H1 (cell line): ENCODE measurements at regions of chr9 and their contacts with region 1.

Region 1: GRCh38 chr9:124537926-124538325 is 30.7 kb upstream of the NR5A1 start:
- DNase-seq: no peak
- H3K4me3 ChIP-seq: no peak overlapping the region
- H3K27ac ChIP-seq: no peak overlapping the region
- H3K4me1 ChIP-seq: no peaks in the 10 kb centered on the region
- H3K27me3 ChIP-seq: no peaks in the 10 kb centered on the region
- CTCF ChIP-seq: no peak
- EP300 ChIP-seq: no peak
- POLR2A ChIP-seq: no peak
- RAD21 ChIP-seq: no peak

Region 2: DNA sequence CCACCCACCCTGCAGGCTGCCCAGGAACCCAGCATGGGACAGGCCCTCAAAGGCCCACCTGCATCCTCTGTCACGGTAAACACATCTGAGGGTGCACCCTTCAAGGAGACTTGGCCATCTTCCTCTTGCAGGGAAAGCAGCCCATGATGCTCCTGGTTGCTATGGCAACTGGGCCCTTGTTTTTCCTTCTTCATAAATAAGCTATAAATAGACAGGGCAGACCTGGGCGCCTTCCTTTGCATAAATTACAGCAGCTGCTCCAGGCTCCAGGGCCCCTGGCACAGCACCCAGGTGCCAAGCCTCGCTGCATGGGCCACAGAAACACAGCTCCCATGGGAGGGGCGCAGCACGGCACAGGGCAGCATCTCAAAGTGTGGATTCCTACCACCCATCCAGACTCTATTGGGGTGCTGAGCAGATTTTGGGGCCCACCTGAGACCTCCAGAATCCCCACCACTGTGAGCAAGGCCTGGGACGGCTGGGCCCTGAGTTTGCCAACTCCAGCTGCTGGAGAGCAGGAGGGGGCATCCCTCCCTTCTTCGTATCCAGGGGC is 116.9 kb before region 1 on chr9:
- CTCF ChIA-PET with region 1: interaction called, 19 read pairs
- POLR2A ChIA-PET with region 1: no interaction called
- DNase-seq: no peak
- H3K4me3 ChIP-seq: no peak overlapping the region
- H3K27ac ChIP-seq: no peak overlapping the region
- H3K4me1 ChIP-seq: peaks cover 0 to 2% (median 0%) of the 10 kb centered on the region in 4 experiments; a peak in 3 of 7 replicates
- H3K27me3 ChIP-seq: peaks cover 0 to 3% (median 0%) of the 10 kb centered on the region in 4 experiments; a peak in 2 of 7 replicates
- CTCF ChIP-seq: no peak
- EP300 ChIP-seq: no peak
- POLR2A ChIP-seq: no peak
- RAD21 ChIP-seq: no peak

Region 3: DNA sequence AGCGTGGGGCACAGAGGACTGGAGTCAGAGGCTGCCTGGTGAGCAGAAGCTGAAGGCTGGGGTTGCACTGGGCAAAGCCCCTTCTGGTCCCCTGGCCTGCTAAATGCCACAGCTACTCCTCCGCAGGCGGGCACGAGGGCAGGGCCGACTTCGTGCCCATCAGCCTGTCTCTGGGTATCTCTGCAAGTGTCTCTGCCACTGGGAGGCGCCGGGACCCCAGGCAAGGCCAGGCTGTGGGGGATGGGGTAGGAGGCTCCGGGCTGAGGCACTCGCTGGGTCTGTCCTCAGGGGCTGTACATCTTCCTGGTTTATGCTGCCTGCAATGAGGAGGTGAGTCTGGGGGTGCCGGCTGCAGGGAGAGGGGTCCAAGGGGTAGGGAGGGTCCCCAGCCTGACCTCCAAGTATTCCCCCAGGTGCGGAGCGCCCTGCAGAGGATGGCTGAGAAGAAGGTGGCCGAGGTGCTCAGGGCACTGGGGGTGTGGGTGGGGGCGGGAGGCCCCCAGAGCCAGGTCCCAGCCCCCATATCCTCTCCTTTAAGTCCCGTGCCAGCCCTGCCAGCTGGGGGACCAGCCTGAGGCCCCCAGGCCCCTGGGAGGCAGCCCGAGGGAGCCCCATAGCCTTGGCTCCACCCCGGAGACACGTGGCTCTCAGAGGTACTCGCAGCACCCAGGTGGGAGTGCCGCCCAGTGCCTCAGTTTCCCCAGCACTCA is 62.6 kb before region 1 on chr9:
- CTCF ChIA-PET with region 1: interaction called, 18 read pairs
- POLR2A ChIA-PET with region 1: no interaction called
- DNase-seq: no peak
- H3K4me3 ChIP-seq: no peak overlapping the region
- H3K27ac ChIP-seq: no peak overlapping the region
- H3K4me1 ChIP-seq: peaks cover 3 to 28% (median 21%) of the 10 kb centered on the region in 4 experiments
- H3K27me3 ChIP-seq: peaks cover 8 to 35% (median 32%) of the 10 kb centered on the region in 4 experiments
- CTCF ChIP-seq: peak in 2 of 3 experiments; percentile 64 to 69; a peak in 3 of 4 replicates
- EP300 ChIP-seq: no peak
- POLR2A ChIP-seq: no peak
- RAD21 ChIP-seq: peak; percentile 78 to 85

Region 4: GRCh38 chr9:124480621-124480981 is 57.3 kb before region 1 on chr9:
- CTCF ChIA-PET with region 1: interaction called, 18 read pairs
- POLR2A ChIA-PET with region 1: no interaction called
- DNase-seq: peak; percentile 44 to 80
- H3K4me3 ChIP-seq: no peak overlapping the region
- H3K27ac ChIP-seq: no peak overlapping the region
- H3K4me1 ChIP-seq: peaks cover 4 to 36% (median 30%) of the 10 kb centered on the region in 4 experiments
- H3K27me3 ChIP-seq: peaks cover 8 to 40% (median 38%) of the 10 kb centered on the region in 4 experiments
- CTCF ChIP-seq: peak in 2 of 3 experiments; percentile 71 to 79; a peak in 3 of 4 replicates
- EP300 ChIP-seq: no peak
- POLR2A ChIP-seq: no peak
- RAD21 ChIP-seq: peak; percentile 56 to 60

Region 5: GRCh38 chr9:124559862-124560261 is 21.9 kb after region 1 on chr9:
- CTCF ChIA-PET with region 1: interaction called, 10 read pairs
- POLR2A ChIA-PET with region 1: no interaction called
- DNase-seq: no peak
- H3K4me3 ChIP-seq: no peak overlapping the region
- H3K27ac ChIP-seq: no peak overlapping the region
- H3K4me1 ChIP-seq: peaks cover 0 to 4% (median 1%) of the 10 kb centered on the region in 4 experiments; a peak in 4 of 7 replicates
- H3K27me3 ChIP-seq: no peaks in the 10 kb centered on the region
- CTCF ChIP-seq: no peak
- EP300 ChIP-seq: no peak
- POLR2A ChIP-seq: no peak
- RAD21 ChIP-seq: no peak

Region 6: GRCh38 chr9:124567362-124567761 is 29.4 kb after region 1 on chr9:
- CTCF ChIA-PET with region 1: interaction called, 10 read pairs
- POLR2A ChIA-PET with region 1: no interaction called
- DNase-seq: no peak
- H3K4me3 ChIP-seq: no peak overlapping the region
- H3K27ac ChIP-seq: no peak overlapping the region
- H3K4me1 ChIP-seq: peaks cover 5 to 16% (median 11%) of the 10 kb centered on the region in 4 experiments; a peak in 6 of 7 replicates
- H3K27me3 ChIP-seq: no peaks in the 10 kb centered on the region
- CTCF ChIP-seq: no peak
- EP300 ChIP-seq: no peak
- POLR2A ChIP-seq: no peak
- RAD21 ChIP-seq: no peak

Region 7: GRCh38 chr9:124593651-124594058 is 55.7 kb after region 1 on chr9:
- CTCF ChIA-PET with region 1: interaction called, 30 read pairs
- POLR2A ChIA-PET with region 1: no interaction called
- DNase-seq: peak; percentile 59 to 71
- H3K4me3 ChIP-seq: peak overlapping the region; percentile 12 to 55 (median 28); a peak in 6 of 8 replicates
- H3K27ac ChIP-seq: peak overlapping the region; percentile 69
- H3K4me1 ChIP-seq: peaks cover 7 to 39% (median 29%) of the 10 kb centered on the region in 4 experiments
- H3K27me3 ChIP-seq: no peaks in the 10 kb centered on the region
- CTCF ChIP-seq: no peak
- EP300 ChIP-seq: peak in 1 of 2 experiments; percentile 91; a peak in 2 of 3 replicates
- POLR2A ChIP-seq: peak in 1 of 2 experiments; percentile 18; a peak in 2 of 3 replicates
- RAD21 ChIP-seq: peak in 1 of 2 experiments; percentile 20; a peak in 1 of 4 replicates